Activated naive CD4-positive, alpha-beta T cell treated with anti-CD3 and anti-CD28 coated beads, Interleukin-2, amount 10 ng/mL, durations not matched to agents 7 days and 5 days (primary cell): ENCODE measurements at regions of chr17 and their contacts with region 1.

Region 1: GRCh38 chr17:75632863-75633485 is at the start of gene SMIM5:
- DNase-seq: peak; percentile 91
- H3K4me3 Mint-ChIP-seq: no peak within 1 kb of the TSS
- H3K27ac Mint-ChIP-seq: no peak within 1 kb of the TSS
- H3K4me1 Mint-ChIP-seq: no peaks in the 10 kb centered on the region
- H3K27me3 Mint-ChIP-seq: no peaks in the 10 kb centered on the region

Region 2: DNA sequence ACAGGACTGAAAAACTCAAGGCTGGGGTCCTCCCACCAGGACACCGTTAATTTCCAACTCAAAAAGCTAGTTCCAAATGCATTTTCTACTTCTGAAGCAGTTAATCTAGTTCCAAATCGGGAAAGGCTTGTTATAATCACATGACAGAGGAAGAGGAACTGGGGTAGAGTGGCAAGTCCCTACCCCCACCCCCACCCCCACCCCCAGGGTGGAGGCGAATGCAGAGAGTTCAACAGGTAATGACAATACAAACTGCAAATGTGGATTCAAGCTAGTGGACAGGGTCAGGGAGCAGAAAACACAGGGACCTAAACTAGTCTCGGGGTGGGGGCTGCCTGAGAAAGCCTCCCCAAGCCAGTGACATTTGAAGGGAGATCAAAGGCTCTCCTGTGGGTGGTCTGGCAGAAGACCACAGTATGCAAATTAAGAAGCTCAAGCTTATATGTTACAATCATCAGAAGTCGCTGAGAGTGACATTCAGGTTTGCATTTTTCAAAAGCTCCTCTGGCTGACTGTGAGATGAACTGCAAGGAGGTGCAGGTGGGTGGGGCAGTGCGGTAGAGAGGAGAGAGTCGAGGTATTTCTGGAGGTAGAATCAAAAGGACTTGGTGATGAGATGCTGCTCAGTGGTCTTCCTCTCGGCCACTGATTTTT is 287.3 kb before region 1 on chr17:
- CTCF ChIA-PET with region 1: no interaction called
- DNase-seq: peak; percentile 71
- H3K4me3 Mint-ChIP-seq: peak overlapping the region; percentile 68
- H3K27ac Mint-ChIP-seq: peak overlapping the region; percentile 92
- H3K4me1 Mint-ChIP-seq: peaks cover 90% of the 10 kb centered on the region
- H3K27me3 Mint-ChIP-seq: no peaks in the 10 kb centered on the region

Region 3: DNA sequence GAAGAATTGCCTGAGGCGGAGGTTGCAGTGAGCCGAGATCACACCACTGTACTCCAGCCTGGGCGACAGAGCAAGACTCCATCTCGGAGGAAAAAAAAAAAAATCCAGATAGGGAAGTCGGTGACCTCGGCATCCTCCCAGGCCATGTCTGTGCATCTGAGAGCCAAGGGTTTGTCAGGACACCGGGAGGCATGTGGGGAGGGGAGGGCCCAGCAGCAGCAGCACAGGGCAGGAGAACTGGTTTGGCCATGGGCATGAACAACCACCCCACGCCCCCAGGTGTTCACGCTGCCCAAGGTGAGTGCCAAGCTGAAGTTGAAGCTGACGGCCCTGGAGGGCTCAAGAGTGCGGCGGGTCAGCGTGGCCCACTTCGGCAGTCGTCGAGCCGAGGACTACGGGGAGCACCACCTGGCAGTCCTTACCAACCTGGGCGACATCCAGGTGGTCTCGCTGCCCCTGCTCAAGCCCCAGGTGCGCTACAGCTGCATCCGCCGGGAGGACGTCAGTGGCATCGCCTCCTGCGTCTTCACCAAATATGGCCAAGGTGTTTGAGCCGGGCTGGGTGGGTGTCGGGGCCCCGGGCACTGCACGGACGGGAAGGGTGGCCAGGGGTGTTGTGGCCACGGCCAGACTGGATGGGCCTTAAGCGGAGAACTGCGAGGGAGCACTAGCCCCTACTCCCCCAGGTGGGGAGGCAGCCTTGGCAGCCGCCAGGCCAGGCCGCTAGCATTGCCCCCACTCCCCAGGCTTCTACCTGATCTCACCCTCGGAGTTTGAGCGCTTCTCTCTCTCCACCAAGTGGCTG is 60.0 kb before region 1 on chr17:
- CTCF ChIA-PET with region 1: no interaction called
- DNase-seq: no peak
- H3K4me3 Mint-ChIP-seq: no peak overlapping the region
- H3K27ac Mint-ChIP-seq: no peak overlapping the region
- H3K4me1 Mint-ChIP-seq: peaks cover 3% of the 10 kb centered on the region
- H3K27me3 Mint-ChIP-seq: peaks cover 15% of the 10 kb centered on the region

Region 4: DNA sequence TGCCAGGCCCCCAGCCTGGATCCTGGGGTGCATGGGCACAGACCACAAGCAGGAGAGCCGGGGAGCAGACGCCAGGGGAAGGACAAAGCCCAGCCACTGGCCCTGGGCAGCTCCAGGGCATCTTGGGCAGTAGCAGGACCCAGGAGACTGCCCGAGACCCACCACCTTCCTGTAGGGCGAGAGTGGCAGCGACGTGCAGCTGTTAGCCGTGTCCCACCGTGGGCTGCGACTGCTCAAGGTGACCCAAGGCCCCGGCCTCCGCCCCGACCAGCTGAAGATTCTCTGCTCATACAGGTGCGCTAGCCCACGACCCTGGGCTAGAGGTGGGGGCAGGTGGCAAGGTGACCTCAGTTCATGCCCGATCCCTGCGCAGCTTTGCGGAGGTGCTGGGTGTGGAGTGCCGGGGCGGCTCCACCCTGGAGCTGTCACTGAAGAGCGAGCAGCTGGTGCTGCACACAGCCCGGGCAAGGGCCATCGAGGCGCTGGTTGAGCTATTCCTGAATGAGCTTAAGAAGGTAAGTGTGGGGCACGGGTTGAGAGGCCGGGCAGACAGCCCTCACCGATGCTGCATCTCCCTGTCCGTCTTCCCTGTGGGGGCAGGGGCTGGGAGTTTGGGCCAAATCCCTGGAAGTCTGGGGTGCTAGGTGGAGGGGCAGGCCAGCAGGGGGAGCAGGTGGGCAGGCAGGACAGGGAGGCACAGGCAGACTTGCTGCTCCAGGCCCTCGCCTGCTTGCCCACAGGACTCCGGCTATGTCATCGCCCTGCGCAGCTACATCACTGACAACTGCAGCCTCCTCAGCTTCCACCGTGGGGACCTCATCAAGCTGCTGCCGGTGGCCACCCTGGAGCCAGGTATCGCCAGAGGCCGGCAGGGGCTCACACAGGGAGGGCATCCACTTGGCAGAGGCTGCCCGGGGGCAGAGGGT is 13.2 kb before region 1 on chr17:
- CTCF ChIA-PET with region 1: interaction called, 30 read pairs
- DNase-seq: peak; percentile 55
- H3K4me3 Mint-ChIP-seq: no peak overlapping the region
- H3K27ac Mint-ChIP-seq: no peak overlapping the region
- H3K4me1 Mint-ChIP-seq: no peaks in the 10 kb centered on the region
- H3K27me3 Mint-ChIP-seq: no peaks in the 10 kb centered on the region

Region 5: DNA sequence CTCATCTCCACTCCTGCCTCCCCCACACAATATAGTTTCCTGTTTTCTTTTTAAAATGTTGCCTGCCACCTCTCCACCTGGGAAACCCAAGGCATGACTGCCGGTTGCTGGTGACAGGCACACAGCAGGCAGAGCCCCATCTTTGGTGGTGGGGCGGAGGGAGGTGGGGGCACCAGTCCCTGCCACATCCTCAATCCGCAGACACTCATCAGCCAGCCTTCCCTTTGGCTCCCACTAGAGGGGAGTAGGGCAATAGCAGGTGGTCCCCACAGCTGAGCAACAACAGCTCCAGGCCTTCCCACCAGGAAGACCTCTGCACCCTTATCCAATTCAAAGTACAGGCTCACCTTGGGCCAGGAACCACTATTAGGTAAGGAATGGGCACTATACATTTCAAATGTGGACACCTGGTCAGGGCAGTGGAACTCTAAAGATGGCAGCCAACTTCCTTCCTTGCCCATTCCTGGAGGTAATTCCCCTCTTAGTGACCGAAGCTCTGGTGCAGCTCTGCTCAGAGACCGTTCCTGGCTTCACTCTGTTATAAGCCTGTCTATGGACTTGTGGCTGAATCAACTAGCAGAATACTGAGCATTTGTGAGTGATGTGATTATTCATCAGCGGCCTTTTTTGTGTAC is 20.1 kb after region 1 on chr17:
- CTCF ChIA-PET with region 1: interaction called, 101 read pairs
- DNase-seq: peak; percentile 47
- H3K4me3 Mint-ChIP-seq: no peak overlapping the region
- H3K27ac Mint-ChIP-seq: no peak overlapping the region
- H3K4me1 Mint-ChIP-seq: peaks cover 5% of the 10 kb centered on the region
- H3K27me3 Mint-ChIP-seq: no peaks in the 10 kb centered on the region

Region 6: DNA sequence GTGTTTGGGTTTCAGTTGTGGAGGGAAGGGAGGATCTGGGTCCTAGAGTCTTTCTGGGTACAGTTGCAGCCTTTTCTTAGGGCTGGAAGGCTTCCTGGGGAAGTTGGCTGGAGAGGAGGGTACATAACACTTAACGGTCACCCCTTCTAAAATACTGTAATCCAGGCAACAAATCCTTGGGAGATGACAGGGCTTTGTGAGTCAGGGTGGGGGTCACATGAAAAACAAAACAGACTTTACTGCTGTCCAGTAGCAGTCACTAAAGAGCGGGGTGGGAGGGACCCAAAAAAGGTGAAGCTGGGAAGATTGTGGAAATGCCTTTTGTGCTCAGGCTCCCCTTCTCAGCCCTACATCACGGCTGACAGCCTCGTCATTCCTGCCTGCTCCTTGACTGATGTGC is 40.5 kb after region 1 on chr17:
- CTCF ChIA-PET with region 1: interaction called, 15 read pairs
- DNase-seq: no peak
- H3K4me3 Mint-ChIP-seq: no peak overlapping the region
- H3K27ac Mint-ChIP-seq: no peak overlapping the region
- H3K4me1 Mint-ChIP-seq: peaks cover 20% of the 10 kb centered on the region
- H3K27me3 Mint-ChIP-seq: no peaks in the 10 kb centered on the region

Region 7: DNA sequence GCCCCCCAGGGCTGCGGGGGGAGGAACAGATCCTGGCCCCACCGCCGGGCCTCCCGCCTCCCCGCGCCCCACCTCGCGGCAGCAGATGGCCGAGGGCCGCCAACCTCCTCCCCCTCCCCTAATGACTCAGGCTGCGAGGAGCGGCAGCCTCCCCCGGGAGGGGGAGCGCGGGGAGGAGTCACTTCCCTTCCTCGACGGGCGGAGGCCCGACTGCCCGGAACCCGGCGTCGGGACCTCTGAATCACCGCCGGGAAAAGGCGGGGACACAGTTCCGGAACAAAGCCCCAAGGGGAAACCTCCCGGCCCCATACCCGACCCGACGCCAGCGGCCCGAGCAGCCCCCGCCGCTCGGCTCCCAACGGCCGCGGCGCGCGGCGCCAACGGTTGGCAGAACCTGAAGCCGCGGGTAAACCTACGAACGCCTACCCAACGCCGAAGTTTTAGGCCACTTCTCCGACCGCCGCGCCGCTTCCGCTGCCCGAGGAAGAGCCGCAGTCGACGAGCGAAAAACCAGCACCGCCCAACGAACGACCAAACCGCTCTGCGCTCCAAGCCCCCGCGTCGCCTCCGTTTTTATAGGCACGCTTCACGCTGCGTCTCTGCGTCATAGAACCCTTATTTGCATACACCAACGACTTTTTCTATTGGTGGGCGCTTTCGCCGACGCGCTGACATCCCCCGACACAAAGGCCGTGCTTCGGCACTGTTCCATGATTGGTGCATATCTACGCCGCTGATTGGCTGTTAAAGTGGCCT is 146.4 kb after region 1 on chr17:
- CTCF ChIA-PET with region 1: no interaction called
- DNase-seq: peak; percentile 97
- H3K4me3 Mint-ChIP-seq: peak overlapping the region; percentile 94
- H3K27ac Mint-ChIP-seq: peak overlapping the region; percentile 99
- H3K4me1 Mint-ChIP-seq: peaks cover 62% of the 10 kb centered on the region
- H3K27me3 Mint-ChIP-seq: peaks cover 9% of the 10 kb centered on the region